HepG2 (cell line): ENCODE measurements at regions of chr3 and their contacts with region 1.

Region 1: GRCh38 chr3:141231101-141231935 is at the start of gene PXYLP1:
- DNase-seq: peak; percentile 72
- ATAC-seq: peak; percentile 89
- H3K4me3 ChIP-seq: peak within 1 kb of the TSS; percentile 60 to 82 (median 78)
- H3K27ac ChIP-seq: peak within 1 kb of the TSS; percentile 45
- H3K4me1 ChIP-seq: peaks cover 69% of the 10 kb centered on the region
- H3K27me3 ChIP-seq: peaks cover 0 to 11% of the 10 kb centered on the region in 2 experiments; a peak in 1 of 5 replicates
- CTCF ChIP-seq: peak; percentile 74
- EP300 ChIP-seq: no peak
- POLR2A ChIP-seq: peak; percentile 70 to 72
- RAD21 ChIP-seq: peak; percentile 81
- total RNA-seq, gene PXYLP1: 6.4 and 8.1 TPM in 2 replicates

Region 2: DNA sequence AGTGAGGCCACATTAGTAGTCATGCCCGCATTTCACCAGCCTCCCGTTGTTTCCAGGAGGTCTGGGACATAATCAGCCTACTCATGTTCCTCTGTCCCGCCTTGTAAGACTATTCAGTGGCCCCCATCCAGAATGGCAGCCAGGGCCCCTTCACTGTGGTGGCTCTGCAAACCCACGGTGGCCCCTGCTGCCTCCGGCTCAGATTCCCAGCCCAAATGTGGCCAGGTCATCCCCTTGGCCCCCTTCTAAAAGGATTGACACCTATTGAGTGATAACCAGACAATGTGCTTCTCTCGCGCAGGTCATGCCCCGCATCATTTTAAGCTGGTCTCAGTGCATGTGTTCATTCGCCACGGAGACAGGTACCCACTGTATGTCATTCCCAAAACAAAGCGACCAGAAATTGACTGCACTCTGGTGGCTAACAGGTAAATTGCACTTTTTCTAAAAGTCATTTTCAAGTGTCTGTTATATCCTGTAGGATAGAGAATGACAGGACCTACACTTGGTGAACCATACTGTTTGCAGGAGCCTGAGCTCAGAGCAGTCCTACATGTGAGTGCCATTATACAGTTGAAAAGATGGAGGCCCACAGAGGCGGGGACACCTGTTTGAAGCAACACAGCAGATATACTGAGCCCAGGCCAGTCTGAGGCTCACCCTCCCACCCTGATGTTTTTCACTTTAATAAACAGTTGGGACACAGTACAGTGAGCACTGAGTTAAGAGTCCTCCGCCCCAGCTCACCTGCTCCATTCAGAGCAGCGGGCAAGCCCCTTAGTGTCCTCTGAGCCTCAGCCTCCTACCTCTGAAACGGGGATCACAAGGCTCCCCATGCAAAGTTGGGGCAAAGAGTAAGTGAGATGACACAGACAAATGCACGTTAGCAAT is 48.0 kb after region 1 on chr3:
- CTCF ChIA-PET with region 1: interaction called, 15 read pairs
- POLR2A ChIA-PET with region 1: no interaction called
- in situ Hi-C with region 1: loop called (anchors 5 kb)
- intact Hi-C with region 1: loop called (anchors 1 kb)
- DNase-seq: peak; percentile 23
- ATAC-seq: peak; percentile 81
- H3K4me3 ChIP-seq: no peak overlapping the region
- H3K27ac ChIP-seq: no peak overlapping the region
- H3K4me1 ChIP-seq: peaks cover 12% of the 10 kb centered on the region
- H3K27me3 ChIP-seq: no peaks in the 10 kb centered on the region
- CTCF ChIP-seq: peak; percentile 73
- EP300 ChIP-seq: no peak
- POLR2A ChIP-seq: no peak
- RAD21 ChIP-seq: no peak; the same call in 1 of the 2 replicates